ENCODE measurements at regions of chr2 and their contacts with region 1.

Region 1: GRCh38 chr2:19863303-19864041 is 38.3 kb downstream of the TTC32 start:
- DNase-seq: no peak
- H3K4me3 ChIP-seq: no peak overlapping the region
- H3K27ac ChIP-seq: no peak overlapping the region
- H3K4me1 ChIP-seq: peaks cover 11% of the 10 kb centered on the region
- H3K27me3 ChIP-seq: peaks cover 7% of the 10 kb centered on the region
- CTCF ChIP-seq: peak; percentile 80 to 97 (median 95)

Region 2: GRCh38 chr2:19362755-19363473 is 500.6 kb before region 1 on chr2:
- dilution Hi-C with region 1: loop called (anchors 25 kb)
- DNase-seq: no peak
- H3K4me3 ChIP-seq: peak overlapping the region; percentile 35 to 94 (median 83)
- H3K27ac ChIP-seq: no peak overlapping the region
- H3K4me1 ChIP-seq: peaks cover 4% of the 10 kb centered on the region
- H3K27me3 ChIP-seq: peaks cover 55% of the 10 kb centered on the region
- CTCF ChIP-seq: peak; percentile 68 to 79 (median 69)